MCF 10A (cell line): ENCODE measurements at regions of chr1 and their contacts with region 1.

Region 1: DNA sequence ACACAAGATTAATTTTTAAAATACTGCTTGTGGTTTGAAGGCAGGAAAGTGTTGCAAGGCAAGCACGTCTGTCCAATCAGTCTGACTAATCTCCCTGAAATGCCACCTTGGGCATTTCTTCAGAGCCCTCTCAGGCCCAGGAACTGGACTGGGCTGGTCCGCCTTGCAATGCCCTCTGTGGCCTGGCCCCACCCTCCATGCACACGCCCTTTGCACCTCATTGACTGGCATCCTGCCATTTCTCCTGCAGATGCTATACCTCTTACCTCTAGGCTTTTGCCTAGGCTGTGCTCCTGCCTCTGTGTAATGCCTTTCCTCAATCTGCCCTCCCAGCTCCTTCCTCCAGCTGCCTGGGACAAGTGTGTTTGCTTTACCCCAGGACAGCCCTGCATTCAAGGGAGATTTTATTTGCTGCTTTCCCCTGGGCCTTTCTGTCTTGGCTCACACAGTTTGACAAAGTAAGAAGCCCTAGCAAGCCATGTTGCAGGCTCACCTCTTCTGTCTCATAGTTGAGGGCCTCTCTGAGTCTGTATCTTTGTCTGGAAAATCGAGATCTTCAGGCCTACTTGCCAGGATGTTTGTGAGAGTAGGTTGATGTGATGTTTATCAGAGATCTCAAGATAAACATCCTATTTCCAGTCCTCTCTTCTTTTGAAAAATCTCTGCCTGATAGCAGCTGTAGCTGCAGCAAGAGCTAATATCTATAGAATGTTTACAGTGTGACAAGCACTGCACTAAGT is 149.2 kb upstream of the JUN start:
- DNase-seq: peak; percentile 99
- H3K4me3 Mint-ChIP-seq: peak overlapping the region; percentile 20
- H3K27ac Mint-ChIP-seq: peak overlapping the region; percentile 86
- H3K4me1 Mint-ChIP-seq: peaks cover 62% of the 10 kb centered on the region
- H3K27me3 Mint-ChIP-seq: no peaks in the 10 kb centered on the region
- CTCF ChIP-seq: no peak

Region 2: DNA sequence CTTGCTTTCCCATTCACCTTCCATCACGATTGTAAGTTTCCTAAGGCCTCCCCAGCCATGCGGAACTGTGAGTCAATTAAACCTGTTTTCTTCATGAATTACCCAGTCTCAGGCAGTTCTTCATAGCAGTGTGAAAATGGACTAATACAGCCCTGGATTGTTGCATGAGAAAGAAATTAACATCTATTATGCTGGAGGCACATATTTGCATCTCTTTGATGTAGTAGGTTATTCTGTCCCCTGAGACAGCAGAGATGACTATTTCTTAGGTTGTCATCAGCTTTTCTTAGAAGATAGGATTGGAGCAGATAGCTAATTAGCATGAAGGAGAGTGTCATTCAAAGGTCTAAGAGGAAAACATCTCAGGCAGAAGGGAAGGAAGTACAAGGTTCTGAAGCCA is 552.7 kb before region 1 on chr1:
- CTCF ChIA-PET with region 1: no interaction called
- POLR2A ChIA-PET with region 1: no interaction called
- intact Hi-C with region 1: no loop called
- DNase-seq: no peak
- H3K4me3 Mint-ChIP-seq: no peak overlapping the region
- H3K27ac Mint-ChIP-seq: no peak overlapping the region
- H3K4me1 Mint-ChIP-seq: no peaks in the 10 kb centered on the region
- H3K27me3 Mint-ChIP-seq: no peaks in the 10 kb centered on the region
- CTCF ChIP-seq: no peak

Region 3: GRCh38 chr1:58848818-58849411 is 84.1 kb before region 1 on chr1:
- CTCF ChIA-PET with region 1: no interaction called
- POLR2A ChIA-PET with region 1: interaction called, 8 read pairs
- intact Hi-C with region 1: loop called (anchors 2 kb)
- DNase-seq: peak; percentile 99
- H3K4me3 Mint-ChIP-seq: peak overlapping the region; percentile 33
- H3K27ac Mint-ChIP-seq: no peak overlapping the region
- H3K4me1 Mint-ChIP-seq: peaks cover 23% of the 10 kb centered on the region
- H3K27me3 Mint-ChIP-seq: no peaks in the 10 kb centered on the region
- CTCF ChIP-seq: no peak

Region 4: GRCh38 chr1:58922302-58923089 is 10.5 kb before region 1 on chr1:
- CTCF ChIA-PET with region 1: interaction called, 4 read pairs
- POLR2A ChIA-PET with region 1: interaction called, 38 read pairs
- intact Hi-C with region 1: no loop called
- DNase-seq: peak; percentile 91
- H3K4me3 Mint-ChIP-seq: peak overlapping the region; percentile 7
- H3K27ac Mint-ChIP-seq: peak overlapping the region; percentile 87
- H3K4me1 Mint-ChIP-seq: peaks cover 52% of the 10 kb centered on the region
- H3K27me3 Mint-ChIP-seq: no peaks in the 10 kb centered on the region
- CTCF ChIP-seq: no peak

Region 5: GRCh38 chr1:59076612-59077011 is 143.6 kb after region 1 on chr1:
- CTCF ChIA-PET with region 1: no interaction called
- POLR2A ChIA-PET with region 1: no interaction called
- intact Hi-C with region 1: loop called (anchors 10 kb)
- DNase-seq: no peak
- H3K4me3 Mint-ChIP-seq: no peak overlapping the region
- H3K27ac Mint-ChIP-seq: no peak overlapping the region
- H3K4me1 Mint-ChIP-seq: peaks cover 11% of the 10 kb centered on the region
- H3K27me3 Mint-ChIP-seq: no peaks in the 10 kb centered on the region
- CTCF ChIP-seq: peak; percentile 20

Region 6: DNA sequence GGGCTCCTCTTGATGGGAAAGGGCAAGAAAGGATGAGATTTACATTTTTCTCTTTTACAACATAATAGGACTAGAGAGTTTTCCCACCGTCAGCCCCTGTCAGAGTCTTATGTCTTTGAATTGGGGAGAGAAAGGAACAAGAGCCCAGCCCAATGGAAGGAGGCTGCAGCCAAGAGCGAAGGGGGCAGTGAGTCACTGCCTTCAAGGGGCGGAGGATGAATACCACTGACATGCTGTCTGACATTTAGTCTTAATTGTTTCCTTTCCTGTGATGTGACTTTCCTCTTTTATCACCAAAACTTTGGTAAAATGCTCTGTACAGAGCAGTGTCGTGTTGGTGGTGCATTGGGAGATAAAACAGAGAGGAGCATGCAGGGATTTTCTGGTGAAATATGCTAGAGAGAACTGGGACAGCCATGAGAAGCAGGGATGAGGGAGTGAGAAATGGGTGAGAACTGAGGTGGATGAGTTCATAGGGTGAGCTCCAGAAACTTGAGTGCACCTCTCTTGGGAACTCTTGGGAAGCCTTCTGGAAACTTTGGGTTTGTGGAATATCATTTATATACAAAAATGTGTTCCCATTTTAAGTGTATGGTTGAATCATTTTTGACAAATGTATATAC is 184.0 kb after region 1 on chr1:
- CTCF ChIA-PET with region 1: no interaction called
- POLR2A ChIA-PET with region 1: no interaction called
- intact Hi-C with region 1: no loop called
- DNase-seq: peak; percentile 52
- H3K4me3 Mint-ChIP-seq: no peak overlapping the region
- H3K27ac Mint-ChIP-seq: no peak overlapping the region
- H3K4me1 Mint-ChIP-seq: peaks cover 9% of the 10 kb centered on the region
- H3K27me3 Mint-ChIP-seq: no peaks in the 10 kb centered on the region
- CTCF ChIP-seq: no peak